ENCODE measurements at regions of chr15 and their contacts with region 1.

Region 1: DNA sequence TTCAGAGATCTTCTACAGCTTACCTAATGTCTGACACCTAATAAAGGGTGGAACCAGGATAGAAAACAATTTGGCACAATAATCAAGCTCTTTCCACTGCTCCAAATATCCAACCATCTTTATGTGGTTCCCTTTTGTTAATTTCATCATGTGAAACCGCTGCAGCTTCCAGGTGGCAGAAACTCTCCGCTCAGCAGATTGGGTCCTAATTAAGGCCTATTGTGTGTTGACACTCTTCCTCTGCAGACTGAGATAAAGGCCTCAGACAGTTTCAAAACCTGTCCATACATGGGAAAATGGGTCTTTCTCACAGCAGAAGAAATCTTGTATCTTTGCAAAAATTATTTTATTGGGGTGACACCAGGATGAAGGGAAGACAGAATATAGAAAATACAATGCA is 1002.4 kb upstream of the SEMA6D start:
- DNase-seq: no peak
- ATAC-seq: no peak
- H3K4me3 ChIP-seq: no peak overlapping the region
- H3K27ac ChIP-seq: no peak overlapping the region
- H3K4me1 ChIP-seq: no peaks in the 10 kb centered on the region
- H3K27me3 ChIP-seq: no peaks in the 10 kb centered on the region
- CTCF ChIP-seq: no peak
- POLR2A ChIP-seq: no peak

Region 2: GRCh38 chr15:46654993-46655392 is 60.0 kb before region 1 on chr15:
- intact Hi-C with region 1: loop called in 1 of 10 experiments (anchors 10 kb)
- DNase-seq: no peak
- ATAC-seq: no peak
- H3K4me3 ChIP-seq: no peak overlapping the region
- H3K27ac ChIP-seq: no peak overlapping the region
- H3K4me1 ChIP-seq: no peaks in the 10 kb centered on the region
- H3K27me3 ChIP-seq: no peaks in the 10 kb centered on the region
- CTCF ChIP-seq: no peak
- POLR2A ChIP-seq: no peak

Measured in heart left ventricle (tissue), 16 donors.